ENCODE measurements at regions of chr17 and their contacts with region 1.

Region 1: GRCh38 chr17:38702166-38702899 is 2.7 kb upstream of the MLLT6 start:
- DNase-seq: peak; percentile 92
- H3K4me3 Mint-ChIP-seq: peak overlapping the region; percentile 100
- H3K27ac Mint-ChIP-seq: peak overlapping the region; percentile 100
- H3K4me1 Mint-ChIP-seq: peaks cover 45% of the 10 kb centered on the region
- H3K27me3 Mint-ChIP-seq: no peaks in the 10 kb centered on the region

Region 2: GRCh38 chr17:38454516-38454915 is 247.8 kb before region 1 on chr17:
- CTCF ChIA-PET with region 1: no interaction called
- intact Hi-C with region 1: no loop called
- DNase-seq: no peak
- H3K4me3 Mint-ChIP-seq: no peak overlapping the region
- H3K27ac Mint-ChIP-seq: no peak overlapping the region
- H3K4me1 Mint-ChIP-seq: peaks cover 15% of the 10 kb centered on the region
- H3K27me3 Mint-ChIP-seq: peaks cover 35% of the 10 kb centered on the region

Region 3: DNA sequence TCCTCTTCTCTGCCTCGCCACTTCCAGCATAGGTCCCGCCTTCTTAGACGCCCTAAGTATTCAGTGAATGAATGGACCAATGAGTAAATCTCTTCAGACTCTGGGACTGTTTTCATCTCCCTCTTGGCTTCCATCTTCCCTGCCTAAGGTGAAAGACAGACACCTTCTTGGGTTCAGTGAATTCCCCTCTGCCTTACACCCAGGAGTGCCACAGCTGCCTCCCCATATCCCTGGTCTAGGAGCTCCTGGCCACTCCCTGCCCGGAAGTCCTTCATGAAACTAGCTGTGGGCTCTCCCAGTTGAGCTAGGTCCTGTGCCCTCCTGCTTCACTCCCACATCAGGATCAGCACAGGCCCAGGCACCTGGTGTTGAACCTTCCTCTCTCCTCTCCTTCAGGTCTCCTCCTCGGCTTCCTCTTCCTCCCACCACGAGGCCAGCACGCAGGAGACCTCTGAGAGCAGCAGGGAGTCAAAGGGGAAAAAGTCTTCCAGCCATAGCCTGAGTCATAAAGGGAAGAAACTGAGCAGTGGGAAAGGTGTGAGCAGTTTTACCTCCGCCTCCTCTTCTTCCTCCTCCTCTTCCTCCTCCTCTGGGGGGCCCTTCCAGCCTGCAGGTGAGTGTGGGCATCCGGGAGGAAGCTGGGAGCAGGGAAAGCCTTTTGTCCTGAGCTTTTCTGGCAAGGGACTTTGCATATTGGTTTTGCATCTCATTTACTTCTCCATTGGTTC is 13.0 kb after region 1 on chr17:
- CTCF ChIA-PET with region 1: interaction called, 3 read pairs
- intact Hi-C with region 1: loop called (anchors 1 kb)
- DNase-seq: peak; percentile 29
- H3K4me3 Mint-ChIP-seq: peak overlapping the region; percentile 38
- H3K27ac Mint-ChIP-seq: peak overlapping the region; percentile 93
- H3K4me1 Mint-ChIP-seq: peaks cover 48% of the 10 kb centered on the region
- H3K27me3 Mint-ChIP-seq: no peaks in the 10 kb centered on the region

Region 4: DNA sequence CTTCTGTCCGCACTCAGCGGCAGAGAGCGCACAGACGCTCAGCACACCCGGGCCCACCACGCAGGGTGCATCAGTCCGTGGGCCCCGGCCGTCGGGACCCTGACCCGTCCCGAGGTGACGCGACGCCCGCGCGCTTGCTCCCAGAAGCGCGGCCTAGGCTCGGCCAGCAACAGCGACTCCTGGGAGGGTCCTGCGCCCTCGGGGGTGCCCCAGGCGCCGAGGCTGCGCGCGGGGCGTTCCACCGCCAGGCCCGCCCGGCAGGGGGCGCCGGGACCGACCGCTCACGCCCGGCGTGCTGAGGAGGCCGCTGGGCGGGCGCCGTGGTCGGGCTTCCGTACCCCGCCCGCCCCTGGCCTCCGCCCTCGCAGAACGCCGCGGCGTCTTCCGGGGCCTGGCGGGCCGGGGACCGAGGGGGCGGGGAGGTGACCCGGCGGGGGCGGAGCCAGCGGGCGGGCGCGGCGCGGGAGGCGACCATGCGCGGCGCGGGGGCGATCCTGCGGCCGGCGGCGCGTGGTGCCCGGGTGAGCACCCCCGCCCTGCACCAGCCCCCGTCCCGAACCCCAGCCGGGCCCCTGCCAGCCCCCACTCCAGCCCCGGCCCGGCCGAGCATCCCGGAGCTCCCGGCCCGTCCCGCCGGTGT is 27.7 kb after region 1 on chr17 and contains the start of gene CISD3:
- CTCF ChIA-PET with region 1: interaction called, 9 read pairs
- intact Hi-C with region 1: loop called (anchors 1 kb)
- DNase-seq: peak; percentile 84
- H3K4me3 Mint-ChIP-seq: peak within 1 kb of the TSS; percentile 94
- H3K27ac Mint-ChIP-seq: peak within 1 kb of the TSS; percentile 98
- H3K4me1 Mint-ChIP-seq: peaks cover 83% of the 10 kb centered on the region
- H3K27me3 Mint-ChIP-seq: no peaks in the 10 kb centered on the region
- total RNA-seq, gene CISD3: 35.1 to 35.8 TPM

Region 5: DNA sequence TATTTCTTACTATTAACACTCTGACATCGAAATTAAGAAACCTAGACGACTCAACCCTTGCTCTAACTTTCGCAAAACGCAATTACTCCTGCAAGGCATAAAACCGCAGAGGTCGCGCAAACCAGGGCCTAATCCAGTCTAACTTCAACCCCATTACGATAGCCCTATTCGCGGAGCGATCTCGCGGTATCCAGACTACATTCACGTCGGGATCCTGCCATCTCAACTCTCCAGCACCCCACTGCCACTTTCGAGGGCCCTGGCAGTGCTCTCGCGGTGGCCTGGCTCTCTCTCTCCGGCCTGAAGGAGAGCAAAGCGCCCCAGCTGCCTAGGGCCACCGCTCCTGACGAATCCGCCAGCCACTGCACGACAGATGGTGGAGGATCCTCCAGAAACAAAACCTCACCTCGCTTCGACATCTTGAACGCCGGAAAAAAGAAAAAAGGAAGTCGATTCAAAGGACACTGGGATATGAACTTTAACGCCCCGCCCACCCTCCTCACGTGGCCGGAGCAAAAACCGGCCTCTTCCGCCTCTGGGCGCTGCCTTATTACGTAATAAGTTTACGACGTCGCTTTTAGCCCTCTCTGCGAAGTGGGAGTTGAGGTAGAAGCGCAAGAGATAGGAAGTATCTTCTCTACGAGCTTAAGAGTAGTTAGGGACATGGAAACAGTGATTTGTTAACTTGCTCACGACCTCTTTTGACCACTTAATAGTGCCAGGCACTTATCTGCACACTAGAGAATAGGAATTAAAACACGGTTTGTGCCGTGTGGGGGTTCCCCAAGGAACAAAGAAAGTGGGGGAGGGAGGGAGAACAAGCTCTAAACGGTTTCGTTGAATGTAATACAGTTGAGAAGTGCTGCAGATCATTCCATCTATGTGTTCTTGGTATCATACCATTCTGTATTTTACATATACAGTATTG is 151.2 kb after region 1 on chr17 and contains the start of gene RPL23:
- CTCF ChIA-PET with region 1: no interaction called
- intact Hi-C with region 1: loop called (anchors 1 kb)
- DNase-seq: peak; percentile 95
- H3K4me3 Mint-ChIP-seq: peak within 1 kb of the TSS; percentile 96
- H3K27ac Mint-ChIP-seq: peak within 1 kb of the TSS; percentile 99
- H3K4me1 Mint-ChIP-seq: peaks cover 43% of the 10 kb centered on the region
- H3K27me3 Mint-ChIP-seq: no peaks in the 10 kb centered on the region
- total RNA-seq, gene RPL23: 2,241 to 2,332 TPM

Region 6: GRCh38 chr17:39401412-39402243 is 699.3 kb after region 1 on chr17 and contains the start of gene FBXL20:
- CTCF ChIA-PET with region 1: no interaction called
- intact Hi-C with region 1: loop called (anchors 2 kb)
- DNase-seq: peak; percentile 96
- H3K4me3 Mint-ChIP-seq: peak within 1 kb of the TSS; percentile 91
- H3K27ac Mint-ChIP-seq: peak within 1 kb of the TSS; percentile 90
- H3K4me1 Mint-ChIP-seq: peaks cover 61% of the 10 kb centered on the region
- H3K27me3 Mint-ChIP-seq: no peaks in the 10 kb centered on the region
- total RNA-seq, gene FBXL20: 14.2 to 15.4 TPM

Measured in activated naive CD4-positive, alpha-beta T cell treated with anti-CD3 and anti-CD28 coated beads for 36 hours (primary cell).